Activated T-helper 2 cell treated with anti-CD3 and anti-CD28 coated beads, Interferon-gamma antibody, Interleukin-2, Interleukin-4, amounts not matched to agents 10 μg/mL and 5 μg/mL and 100 μg/mL, durations not matched to agents 14 hours and 24 hours and 36 hours (primary cell): ENCODE measurements at regions of chr12 and their contacts with region 1.

Region 1: GRCh38 chr12:14995583-14996425 is 23.0 kb downstream of the PDE6H start:
- DNase-seq: no peak
- H3K4me3 Mint-ChIP-seq: no peak overlapping the region
- H3K27ac Mint-ChIP-seq: no peak overlapping the region
- H3K4me1 Mint-ChIP-seq: peaks cover 23% of the 10 kb centered on the region
- H3K27me3 Mint-ChIP-seq: peaks cover 27% of the 10 kb centered on the region

Region 2: GRCh38 chr12:14723763-14724162 is 272.0 kb before region 1 on chr12:
- intact Hi-C with region 1: loop called (anchors 2 kb)
- DNase-seq: peak; percentile 22
- H3K4me3 Mint-ChIP-seq: no peak overlapping the region
- H3K27ac Mint-ChIP-seq: no peak overlapping the region
- H3K4me1 Mint-ChIP-seq: peaks cover 2% of the 10 kb centered on the region
- H3K27me3 Mint-ChIP-seq: peaks cover 17% of the 10 kb centered on the region

Region 3: DNA sequence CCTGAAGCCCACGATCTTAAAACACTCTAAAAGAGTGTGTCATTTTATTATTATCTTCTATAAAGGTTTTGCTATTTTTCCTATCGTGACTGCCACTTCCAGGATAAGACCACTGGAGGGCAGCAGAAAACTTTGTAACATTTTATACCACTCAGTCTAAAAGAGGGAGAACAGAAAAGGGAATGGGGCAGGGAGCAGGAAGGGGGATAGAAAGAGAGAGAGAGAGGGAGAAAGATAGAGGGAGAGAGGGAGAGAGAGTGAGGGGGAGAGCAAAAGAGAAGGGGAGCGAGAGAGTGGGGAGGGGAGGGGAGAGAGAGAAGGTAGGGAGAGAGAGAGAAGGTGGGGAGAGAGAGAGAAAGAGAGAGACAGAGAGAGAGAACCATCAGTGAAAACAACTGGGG is 150.5 kb before region 1 on chr12:
- intact Hi-C with region 1: loop called (anchors 1 kb)
- DNase-seq: no peak
- H3K4me3 Mint-ChIP-seq: no peak overlapping the region
- H3K27ac Mint-ChIP-seq: no peak overlapping the region
- H3K4me1 Mint-ChIP-seq: peaks cover 4% of the 10 kb centered on the region
- H3K27me3 Mint-ChIP-seq: no peaks in the 10 kb centered on the region

Region 4: DNA sequence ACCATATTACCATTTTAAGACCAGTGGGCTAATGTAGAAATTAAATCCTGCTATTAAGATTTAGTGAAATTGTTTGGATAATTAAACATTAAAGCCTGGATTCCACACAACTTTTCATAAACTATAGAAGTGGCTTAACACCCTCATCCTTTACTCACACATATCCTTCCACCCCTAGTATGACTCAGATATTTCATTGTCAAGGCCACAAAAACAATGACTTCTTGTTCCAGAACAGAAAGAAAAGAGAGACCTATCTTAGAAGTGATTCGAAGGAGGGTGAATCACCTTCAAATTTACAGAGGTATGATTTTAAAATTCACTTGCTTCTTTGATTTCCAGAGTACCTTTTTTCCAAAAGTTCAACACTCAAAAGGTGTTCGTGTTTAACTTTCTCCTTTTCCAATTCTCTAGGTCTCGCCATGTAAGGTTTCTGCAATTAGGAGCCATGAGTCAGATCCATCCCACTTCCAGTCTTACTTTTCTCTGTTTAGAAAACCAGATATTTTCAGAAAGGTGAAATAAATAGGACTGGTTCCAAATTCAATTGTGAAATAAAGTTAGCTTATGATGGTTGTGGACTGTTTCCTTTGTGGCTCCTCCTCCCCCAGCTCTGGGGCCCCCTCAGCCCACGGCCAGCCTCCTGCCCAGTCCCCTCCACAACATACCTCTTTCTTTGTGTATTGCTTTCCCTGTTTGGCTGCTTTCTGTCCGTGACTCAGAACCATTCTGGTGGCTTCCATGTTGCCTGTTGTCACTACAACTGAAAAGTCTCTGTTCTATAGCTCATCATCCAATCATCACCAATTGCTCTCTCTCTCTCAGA is 85.5 kb before region 1 on chr12:
- intact Hi-C with region 1: no loop called
- DNase-seq: no peak
- H3K4me3 Mint-ChIP-seq: no peak overlapping the region
- H3K27ac Mint-ChIP-seq: peak overlapping the region; percentile 91
- H3K4me1 Mint-ChIP-seq: peaks cover 24% of the 10 kb centered on the region
- H3K27me3 Mint-ChIP-seq: no peaks in the 10 kb centered on the region

Region 5: GRCh38 chr12:14937689-14938088 is 58.1 kb before region 1 on chr12:
- intact Hi-C with region 1: loop called (anchors 2 kb)
- DNase-seq: no peak
- H3K4me3 Mint-ChIP-seq: no peak overlapping the region
- H3K27ac Mint-ChIP-seq: no peak overlapping the region
- H3K4me1 Mint-ChIP-seq: peaks cover 18% of the 10 kb centered on the region
- H3K27me3 Mint-ChIP-seq: no peaks in the 10 kb centered on the region

Region 6: DNA sequence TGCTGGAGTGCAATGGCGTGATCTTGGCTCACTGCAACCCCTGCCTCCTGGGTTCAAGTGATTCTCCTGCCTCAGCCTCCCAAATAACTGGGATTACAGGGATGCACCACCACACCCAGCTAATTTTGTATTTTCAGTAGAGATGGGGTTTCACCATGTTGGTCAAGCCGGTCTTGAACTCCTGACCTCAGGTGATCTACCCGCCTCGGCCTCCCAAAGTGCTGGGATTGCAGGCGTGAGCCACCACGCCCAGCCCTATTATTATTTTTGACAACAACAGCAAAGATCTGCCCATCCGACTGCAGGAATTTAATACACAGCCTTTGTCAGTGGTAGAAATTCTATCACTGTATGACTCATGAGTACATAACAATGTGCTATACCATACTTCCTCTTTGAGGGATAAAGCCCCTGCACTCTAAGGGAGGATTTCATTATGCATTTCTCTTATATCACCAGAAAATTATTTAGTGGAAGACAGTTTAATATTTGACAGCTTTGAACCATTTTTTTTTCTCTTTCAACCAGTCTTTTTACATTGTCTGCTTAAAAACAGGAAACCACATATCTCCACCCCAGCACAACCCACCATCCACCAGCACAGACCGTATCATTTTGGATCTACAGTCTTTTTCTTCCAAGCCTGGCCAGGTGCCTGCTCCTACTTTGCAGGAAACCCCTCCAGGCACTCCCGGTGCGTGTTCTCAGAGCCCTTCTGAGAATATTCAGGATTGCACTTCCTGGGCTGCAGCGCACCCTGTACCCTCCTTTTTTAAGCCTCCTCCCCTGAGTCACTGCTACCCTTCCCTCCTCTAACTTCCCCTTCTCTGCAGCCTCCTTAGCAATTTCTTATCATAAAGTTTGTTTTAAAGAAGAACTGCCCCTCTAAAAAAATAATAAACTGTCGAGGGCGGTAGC is 35.0 kb before region 1 on chr12:
- intact Hi-C with region 1: loop called (anchors 1 kb)
- DNase-seq: peak; percentile 43
- H3K4me3 Mint-ChIP-seq: peak overlapping the region; percentile 96
- H3K27ac Mint-ChIP-seq: peak overlapping the region; percentile 97
- H3K4me1 Mint-ChIP-seq: peaks cover 58% of the 10 kb centered on the region
- H3K27me3 Mint-ChIP-seq: no peaks in the 10 kb centered on the region